ENCODE measurements at regions of chr16 and their contacts with region 1.

Region 1: GRCh38 chr16:28277537-28278388 is 14.6 kb upstream of the SBK1 start:
- DNase-seq: peak; percentile 87
- CTCF ChIP-seq: peak; percentile 89

Region 2: DNA sequence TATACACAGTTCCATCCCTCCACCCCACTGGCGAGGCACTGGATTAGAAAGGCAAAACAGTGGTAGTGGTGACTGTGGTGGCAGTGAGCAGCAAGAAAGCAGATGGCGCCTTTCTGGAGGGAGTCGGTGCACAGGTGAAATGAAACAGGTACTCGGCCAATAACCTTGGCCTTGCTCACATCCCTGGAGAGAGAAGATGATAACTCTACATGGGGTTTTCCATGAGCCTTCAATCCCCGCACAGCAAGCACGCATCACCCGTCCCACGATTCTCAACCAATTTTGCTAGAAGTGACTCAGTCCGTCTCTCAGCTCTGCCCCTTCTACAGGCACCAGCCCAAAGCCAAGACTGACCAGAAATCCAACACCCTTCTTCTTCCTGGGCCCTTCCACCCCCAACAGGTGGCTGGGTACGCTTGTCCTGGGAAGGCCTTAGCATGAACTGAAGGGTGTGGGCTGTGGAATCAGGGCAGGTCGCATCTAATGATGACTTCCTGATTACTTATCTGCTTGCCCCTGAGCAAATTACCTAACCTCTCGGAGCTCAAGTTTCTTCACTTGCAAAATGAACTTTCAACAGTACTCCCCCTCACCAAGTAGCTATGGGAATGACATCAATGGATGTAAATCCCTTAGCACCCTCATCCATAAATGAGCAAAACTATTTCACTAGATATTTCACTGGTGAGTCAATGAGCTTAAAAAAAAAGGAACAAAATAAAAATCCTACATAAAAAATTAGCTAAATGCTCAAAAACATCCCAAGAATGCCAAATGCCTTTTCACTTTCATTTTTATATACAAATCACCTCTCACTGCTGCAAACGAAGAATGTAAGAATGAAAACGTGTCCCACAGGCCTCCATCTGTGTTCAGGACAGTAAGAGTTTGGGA is 84.0 kb before region 1 on chr16:
- CTCF ChIA-PET with region 1: no interaction called
- POLR2A ChIA-PET with region 1: no interaction called
- DNase-seq: no peak
- CTCF ChIP-seq: no peak

Region 3: DNA sequence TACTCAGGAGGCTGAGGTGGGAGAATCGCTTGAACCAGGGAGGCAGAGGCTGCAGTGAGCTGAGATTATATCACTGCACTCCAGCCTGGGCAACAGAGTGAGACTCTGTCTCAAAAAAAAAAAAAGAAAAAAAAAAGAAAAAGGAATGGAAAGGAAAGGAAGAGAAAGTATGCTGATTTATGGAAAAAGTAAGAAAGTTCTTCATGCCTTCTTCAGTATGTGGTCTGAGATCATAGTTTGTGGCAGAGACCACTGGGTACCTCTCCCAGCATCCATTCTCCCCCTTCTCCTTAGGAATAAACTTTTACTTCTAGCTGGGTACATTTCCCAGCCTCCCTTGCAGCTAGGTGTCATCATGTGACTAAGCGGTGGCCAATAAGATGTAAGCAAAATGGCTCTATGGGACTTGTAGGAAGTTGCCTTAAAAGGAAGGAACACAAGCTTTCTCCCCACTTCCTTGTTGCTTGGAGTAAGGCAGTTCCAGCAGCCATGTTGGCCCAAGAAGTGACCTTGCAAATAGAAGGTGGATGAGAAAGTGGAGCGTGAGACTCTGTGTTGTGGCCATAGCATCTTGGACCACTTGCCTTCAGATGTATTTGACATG is 39.9 kb before region 1 on chr16:
- CTCF ChIA-PET with region 1: no interaction called
- POLR2A ChIA-PET with region 1: no interaction called
- DNase-seq: no peak
- CTCF ChIP-seq: no peak

Region 4: GRCh38 chr16:28264656-28265055 is 13.1 kb before region 1 on chr16:
- CTCF ChIA-PET with region 1: interaction called, 12 read pairs
- POLR2A ChIA-PET with region 1: no interaction called
- DNase-seq: no peak
- CTCF ChIP-seq: no peak

Region 5: DNA sequence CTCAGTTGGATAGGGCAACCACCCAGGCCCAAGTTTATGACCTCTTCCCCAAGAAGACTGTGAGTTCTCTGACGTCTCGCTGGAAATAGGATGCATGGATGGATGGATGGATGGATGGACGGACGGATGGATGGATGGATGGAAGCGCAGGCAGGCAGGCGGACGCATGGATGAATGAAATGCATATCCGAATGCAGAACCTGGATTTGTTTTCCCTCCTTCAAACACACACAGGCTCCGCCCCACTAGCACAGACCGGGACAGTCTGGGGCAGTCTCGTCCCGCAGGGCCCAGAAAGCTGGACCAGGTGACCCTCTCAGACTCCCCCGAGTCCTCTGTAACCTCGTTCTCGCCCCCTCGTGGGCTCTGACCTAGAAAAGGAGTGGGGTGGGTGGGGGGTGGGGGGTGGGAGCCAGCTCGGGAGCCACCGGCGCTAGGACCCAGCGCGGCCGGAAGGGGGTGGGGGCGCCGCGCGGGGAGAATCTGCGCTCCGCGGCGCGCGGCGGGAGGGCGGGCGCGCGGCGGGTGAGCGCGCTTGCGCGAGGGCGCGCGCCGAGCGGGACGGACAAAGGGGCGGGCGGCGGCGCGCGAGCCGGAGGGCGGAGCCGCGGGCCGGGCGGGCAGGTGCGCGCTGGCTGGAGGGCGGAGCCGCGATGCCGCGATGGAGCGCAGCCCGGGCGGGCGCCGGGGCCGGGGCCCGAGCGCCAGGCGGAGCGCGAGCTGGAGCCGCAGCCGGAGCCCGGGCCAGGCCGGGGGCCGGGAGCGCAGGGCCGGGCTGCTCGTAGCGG is 14.3 kb after region 1 on chr16 and contains the start of gene SBK1:
- CTCF ChIA-PET with region 1: interaction called, 11 read pairs
- POLR2A ChIA-PET with region 1: no interaction called
- DNase-seq: peak; percentile 96
- CTCF ChIP-seq: no peak

Region 6: DNA sequence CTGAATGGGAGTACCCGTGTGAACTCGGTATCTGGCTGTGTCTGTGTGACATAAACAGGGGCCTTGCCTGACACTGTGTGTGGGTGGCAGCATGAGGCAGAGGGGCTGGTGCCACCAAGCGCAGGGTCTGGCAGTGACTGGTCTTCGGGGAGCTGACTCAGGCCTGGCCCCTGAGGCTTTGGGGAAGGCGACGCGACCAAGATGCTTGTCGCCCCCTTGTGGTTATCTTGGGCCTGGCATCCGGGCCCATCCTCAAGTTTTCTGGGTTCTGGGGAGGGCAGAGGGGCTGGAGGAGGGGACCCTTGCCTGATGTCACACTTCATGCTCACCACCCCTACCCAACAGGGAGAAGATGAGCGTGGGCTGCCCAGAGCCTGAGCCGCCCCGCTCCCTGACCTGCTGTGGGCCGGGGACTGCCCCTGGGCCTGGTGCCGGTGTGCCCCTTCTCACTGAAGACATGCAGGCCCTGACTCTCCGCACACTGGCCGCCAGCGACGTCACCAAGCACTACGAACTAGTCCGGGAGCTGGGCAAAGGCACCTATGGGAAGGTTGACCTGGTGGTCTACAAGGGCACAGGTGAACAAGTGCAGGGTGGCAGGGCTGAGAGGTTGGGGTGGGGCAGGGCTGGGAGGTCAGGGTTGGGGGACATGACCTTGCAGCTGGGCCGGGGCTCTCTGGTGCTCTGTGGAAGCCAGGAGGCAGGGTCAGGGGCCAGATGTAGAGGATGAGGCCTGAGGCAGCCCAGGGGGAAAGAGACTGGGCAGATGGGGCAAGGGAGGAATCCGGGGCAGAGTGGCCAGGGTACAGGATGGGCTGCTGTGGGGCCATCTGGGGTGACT is 39.5 kb after region 1 on chr16:
- CTCF ChIA-PET with region 1: interaction called, 21 read pairs
- POLR2A ChIA-PET with region 1: interaction called, 4 read pairs
- DNase-seq: peak; percentile 83
- CTCF ChIP-seq: peak; percentile 73

Measured in GM10248 (cell line).